Ascending aorta (tissue), 2 donors: ENCODE measurements at regions of chr17 and their contacts with region 1.

Region 1: GRCh38 chr17:29617125-29617480 is 5.6 kb downstream of the CORO6 start:
- DNase-seq: peak; percentile 54 to 90
- H3K4me3 ChIP-seq: peak overlapping the region; percentile 27 to 62
- H3K27ac ChIP-seq: no peak overlapping the region
- H3K4me1 ChIP-seq: peaks cover 18 to 38% of the 10 kb centered on the region in 2 donors
- H3K27me3 ChIP-seq: no peaks in the 10 kb centered on the region
- CTCF ChIP-seq: peak; percentile 64 to 72 (median 67)

Region 2: DNA sequence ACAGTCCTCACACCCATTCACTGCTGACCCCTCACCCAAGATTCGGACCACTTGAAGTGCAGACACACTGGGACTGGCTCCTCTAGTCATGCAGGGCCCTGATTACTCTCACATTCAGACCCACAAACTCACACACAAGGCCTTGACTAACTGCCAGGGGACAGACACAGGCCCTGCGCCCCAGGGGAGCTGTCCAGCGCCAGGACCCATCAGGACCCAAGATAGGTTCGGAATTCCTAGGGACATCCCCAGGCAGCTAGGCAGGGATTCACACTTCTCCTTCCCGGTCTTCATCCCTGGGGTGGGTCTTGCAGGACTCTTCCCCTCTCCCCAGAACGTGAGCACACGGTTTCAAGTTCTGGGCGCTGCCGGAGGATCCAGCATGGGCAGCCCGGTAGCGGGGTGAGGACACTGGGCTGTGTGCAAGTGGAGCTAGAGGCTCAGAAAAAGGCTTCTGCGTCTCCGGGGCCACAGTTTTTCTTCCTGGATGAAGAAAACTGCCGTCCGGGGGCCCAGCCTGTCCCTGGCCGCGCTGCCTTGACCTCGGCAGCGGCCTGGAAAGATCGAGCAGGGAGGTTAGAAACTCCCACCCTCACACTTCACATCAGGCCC is 612.9 kb before region 1 on chr17:
- intact Hi-C with region 1: no loop called
- DNase-seq: no peak
- H3K4me3 ChIP-seq: no peak overlapping the region
- H3K27ac ChIP-seq: no peak overlapping the region
- H3K4me1 ChIP-seq: peaks cover 0 to 5% of the 10 kb centered on the region in 2 donors
- H3K27me3 ChIP-seq: peaks cover 8% of the 10 kb centered on the region
- CTCF ChIP-seq: no peak

Region 3: DNA sequence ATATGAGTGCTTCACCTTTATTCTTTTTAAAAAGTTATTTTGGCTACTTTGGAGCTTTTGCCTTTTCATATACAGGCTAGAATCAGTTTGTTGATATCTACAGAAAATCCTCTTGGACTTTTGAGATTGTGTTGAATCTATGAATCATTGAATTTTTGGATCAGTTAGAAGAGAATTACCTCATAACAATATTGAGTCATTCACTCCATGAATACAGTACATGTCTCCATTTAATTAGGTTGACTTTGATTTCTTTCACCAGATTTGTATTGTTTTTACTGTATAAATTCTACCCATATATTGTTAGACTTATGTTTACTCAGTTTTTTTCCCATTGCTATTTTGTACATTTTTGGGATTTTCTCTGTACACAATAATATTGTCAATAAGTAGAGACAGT is 172.5 kb before region 1 on chr17:
- intact Hi-C with region 1: no loop called
- DNase-seq: no peak
- H3K4me3 ChIP-seq: no peak overlapping the region
- H3K27ac ChIP-seq: no peak overlapping the region
- H3K4me1 ChIP-seq: peaks cover 0 to 9% of the 10 kb centered on the region in 2 donors
- H3K27me3 ChIP-seq: no peaks in the 10 kb centered on the region
- CTCF ChIP-seq: no peak

Region 4: GRCh38 chr17:29579866-29580771 is 37.0 kb before region 1 on chr17:
- intact Hi-C with region 1: loop called (anchors 1 kb)
- DNase-seq: peak in 1 of 2 donors; percentile 91
- H3K4me3 ChIP-seq: no peak overlapping the region
- H3K27ac ChIP-seq: no peak overlapping the region
- H3K4me1 ChIP-seq: peaks cover 4 to 7% of the 10 kb centered on the region in 2 donors
- H3K27me3 ChIP-seq: no peaks in the 10 kb centered on the region
- CTCF ChIP-seq: peak; percentile 88 to 93 (median 88)

Region 5: GRCh38 chr17:29677221-29677791 is 60.2 kb after region 1 on chr17:
- intact Hi-C with region 1: no loop called
- DNase-seq: peak in 1 of 2 donors; percentile 65
- H3K4me3 ChIP-seq: no peak overlapping the region
- H3K27ac ChIP-seq: peak overlapping the region; percentile 3 to 6
- H3K4me1 ChIP-seq: peaks cover 0 to 7% of the 10 kb centered on the region in 2 donors
- H3K27me3 ChIP-seq: no peaks in the 10 kb centered on the region
- CTCF ChIP-seq: no peak

Region 6: DNA sequence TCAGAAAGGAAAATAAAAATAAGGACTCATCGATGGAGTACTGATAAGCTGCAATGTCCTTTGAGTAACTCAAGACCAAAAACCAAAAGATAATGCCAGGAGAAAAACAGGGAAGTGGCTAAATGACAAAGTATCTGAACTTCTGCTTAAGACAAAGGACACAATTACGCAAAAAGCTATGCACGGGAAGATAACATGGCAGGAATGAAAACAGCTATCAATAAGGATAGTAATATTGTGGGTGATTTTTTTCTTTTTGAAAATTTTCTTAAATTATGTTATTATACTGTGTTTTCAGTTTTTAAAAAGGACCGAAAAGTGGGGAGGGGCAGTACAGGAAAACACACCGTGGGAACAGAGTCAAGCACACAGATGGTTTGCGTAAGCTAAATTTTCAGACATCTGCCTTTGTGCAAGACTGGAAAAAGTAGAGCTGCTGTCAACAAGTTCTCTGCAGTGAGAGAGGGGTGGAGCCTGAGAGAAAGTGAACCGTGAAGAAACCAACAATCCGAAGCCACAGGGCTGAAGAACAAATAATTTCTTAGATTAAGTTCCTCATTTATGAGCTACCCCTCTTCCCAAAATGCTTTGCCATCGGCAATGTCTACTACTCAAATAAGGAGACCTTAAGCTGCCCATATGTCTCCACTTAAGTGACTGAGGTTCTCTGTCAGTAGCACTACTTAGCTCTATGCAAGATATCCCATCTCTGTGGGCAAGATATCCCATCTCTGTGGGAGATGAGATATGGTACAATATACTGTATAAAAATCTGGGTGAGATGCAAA is 105.5 kb after region 1 on chr17:
- intact Hi-C with region 1: no loop called
- DNase-seq: peak; percentile 25 to 71
- H3K4me3 ChIP-seq: no peak overlapping the region
- H3K27ac ChIP-seq: peak overlapping the region in 1 of 2 donors; percentile 56
- H3K4me1 ChIP-seq: no peaks in the 10 kb centered on the region
- H3K27me3 ChIP-seq: no peaks in the 10 kb centered on the region
- CTCF ChIP-seq: no peak